Activated CD4-positive, alpha-beta T cell treated with anti-CD3 and anti-CD28 coated beads, Interleukin-2, amount 10 ng/mL, durations not matched to agents 24 days and 14 days (primary cell): ENCODE measurements at regions of chr6 and their contacts with region 1.

Region 1: GRCh38 chr6:13767121-13767808 is 47.1 kb downstream of the MCUR1 start:
- DNase-seq: peak; percentile 63
- H3K4me3 Mint-ChIP-seq: peak overlapping the region; percentile 51
- H3K27ac Mint-ChIP-seq: no peak overlapping the region
- H3K4me1 Mint-ChIP-seq: peaks cover 36% of the 10 kb centered on the region
- H3K27me3 Mint-ChIP-seq: no peaks in the 10 kb centered on the region

Region 2: GRCh38 chr6:13131935-13132661 is 635.2 kb before region 1 on chr6:
- intact Hi-C with region 1: no loop called
- DNase-seq: peak; percentile 15
- H3K4me3 Mint-ChIP-seq: no peak overlapping the region
- H3K27ac Mint-ChIP-seq: no peak overlapping the region
- H3K4me1 Mint-ChIP-seq: no peaks in the 10 kb centered on the region
- H3K27me3 Mint-ChIP-seq: peaks cover 23% of the 10 kb centered on the region

Region 3: GRCh38 chr6:13454286-13455221 is 312.7 kb before region 1 on chr6:
- intact Hi-C with region 1: loop called (anchors 1 kb)
- DNase-seq: peak; percentile 85
- H3K4me3 Mint-ChIP-seq: peak overlapping the region; percentile 42
- H3K27ac Mint-ChIP-seq: peak overlapping the region; percentile 93
- H3K4me1 Mint-ChIP-seq: peaks cover 43% of the 10 kb centered on the region
- H3K27me3 Mint-ChIP-seq: no peaks in the 10 kb centered on the region

Region 4: GRCh38 chr6:13668291-13668928 is 98.9 kb before region 1 on chr6:
- intact Hi-C with region 1: loop called (anchors 5 kb)
- DNase-seq: no peak
- H3K4me3 Mint-ChIP-seq: peak overlapping the region; percentile 14
- H3K27ac Mint-ChIP-seq: peak overlapping the region; percentile 65
- H3K4me1 Mint-ChIP-seq: peaks cover 61% of the 10 kb centered on the region
- H3K27me3 Mint-ChIP-seq: no peaks in the 10 kb centered on the region

Region 5: GRCh38 chr6:13725570-13725969 is 41.7 kb before region 1 on chr6:
- intact Hi-C with region 1: loop called (anchors 1 kb)
- DNase-seq: peak; percentile 60
- H3K4me3 Mint-ChIP-seq: peak overlapping the region; percentile 47
- H3K27ac Mint-ChIP-seq: peak overlapping the region; percentile 70
- H3K4me1 Mint-ChIP-seq: peaks cover 25% of the 10 kb centered on the region
- H3K27me3 Mint-ChIP-seq: no peaks in the 10 kb centered on the region

Region 6: DNA sequence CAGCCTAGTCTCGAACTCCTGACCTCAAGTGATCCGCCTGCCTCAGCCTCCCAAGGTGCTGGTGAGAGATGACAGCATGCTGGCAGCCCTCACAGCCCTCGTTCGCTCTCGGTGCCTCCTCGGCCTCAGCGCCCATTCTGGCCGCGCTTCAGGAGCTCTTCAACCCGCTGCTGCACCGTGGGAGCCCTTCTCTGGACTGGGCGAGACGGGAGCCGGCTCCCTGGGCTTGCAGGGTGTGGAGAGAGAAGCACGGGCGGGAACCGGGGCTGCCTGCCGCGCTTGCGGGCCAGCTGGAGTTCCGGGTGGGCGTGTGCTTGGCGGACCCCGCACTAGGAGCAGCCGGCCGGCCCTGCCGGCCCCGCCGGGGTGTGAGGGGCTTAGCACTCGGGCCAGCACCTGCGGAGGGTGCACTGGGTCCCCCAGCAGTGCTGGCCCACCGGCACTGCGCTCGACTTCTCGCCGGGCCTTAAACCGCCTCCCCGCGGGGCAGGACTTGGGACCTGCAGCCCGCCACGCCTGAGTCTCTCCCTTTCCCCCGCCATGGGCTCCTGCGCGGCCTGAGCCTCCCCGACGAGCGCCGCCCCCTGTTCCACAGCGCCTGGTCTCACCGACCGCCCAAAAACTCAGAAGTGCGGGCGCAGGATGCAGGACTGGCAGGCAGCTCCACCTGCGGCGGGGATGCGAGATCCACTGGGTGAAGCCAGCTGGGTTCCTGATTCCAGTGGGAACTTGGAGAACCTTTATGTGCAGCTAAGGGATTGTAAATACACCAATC is 24.1 kb before region 1 on chr6:
- intact Hi-C with region 1: loop called (anchors 2 kb)
- DNase-seq: no peak
- H3K4me3 Mint-ChIP-seq: peak overlapping the region; percentile 55
- H3K27ac Mint-ChIP-seq: no peak overlapping the region
- H3K4me1 Mint-ChIP-seq: peaks cover 4% of the 10 kb centered on the region
- H3K27me3 Mint-ChIP-seq: no peaks in the 10 kb centered on the region

Region 7: DNA sequence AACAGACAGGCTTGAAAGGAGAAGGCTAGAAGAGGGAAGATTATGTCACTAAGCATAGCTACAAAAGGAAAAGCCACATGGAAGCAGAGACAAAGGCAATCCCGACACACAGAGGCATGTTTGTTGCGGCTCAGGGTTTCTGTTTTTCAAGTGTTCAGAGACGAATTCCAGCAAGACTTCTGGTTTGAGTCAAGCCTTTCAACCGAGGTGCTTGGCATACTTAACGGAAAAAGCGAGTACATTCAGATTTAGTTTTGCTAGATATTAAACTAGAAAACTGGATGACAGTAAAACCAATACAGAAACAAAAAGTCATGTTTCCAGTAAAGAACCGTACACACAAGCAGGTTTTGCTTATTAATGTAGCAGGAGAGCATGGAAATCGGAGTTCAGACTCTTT is 19.9 kb after region 1 on chr6:
- intact Hi-C with region 1: loop called (anchors 1 kb)
- DNase-seq: no peak
- H3K4me3 Mint-ChIP-seq: peak overlapping the region; percentile 38
- H3K27ac Mint-ChIP-seq: peak overlapping the region; percentile 80
- H3K4me1 Mint-ChIP-seq: peaks cover 26% of the 10 kb centered on the region
- H3K27me3 Mint-ChIP-seq: no peaks in the 10 kb centered on the region

Region 8: GRCh38 chr6:13795041-13795750 is 27.9 kb after region 1 on chr6:
- intact Hi-C with region 1: loop called (anchors 2 kb)
- DNase-seq: peak; percentile 95
- H3K4me3 Mint-ChIP-seq: no peak overlapping the region
- H3K27ac Mint-ChIP-seq: peak overlapping the region; percentile 51
- H3K4me1 Mint-ChIP-seq: peaks cover 14% of the 10 kb centered on the region
- H3K27me3 Mint-ChIP-seq: no peaks in the 10 kb centered on the region